ENCODE measurements at regions of chr15 and their contacts with region 1.

Region 1: DNA sequence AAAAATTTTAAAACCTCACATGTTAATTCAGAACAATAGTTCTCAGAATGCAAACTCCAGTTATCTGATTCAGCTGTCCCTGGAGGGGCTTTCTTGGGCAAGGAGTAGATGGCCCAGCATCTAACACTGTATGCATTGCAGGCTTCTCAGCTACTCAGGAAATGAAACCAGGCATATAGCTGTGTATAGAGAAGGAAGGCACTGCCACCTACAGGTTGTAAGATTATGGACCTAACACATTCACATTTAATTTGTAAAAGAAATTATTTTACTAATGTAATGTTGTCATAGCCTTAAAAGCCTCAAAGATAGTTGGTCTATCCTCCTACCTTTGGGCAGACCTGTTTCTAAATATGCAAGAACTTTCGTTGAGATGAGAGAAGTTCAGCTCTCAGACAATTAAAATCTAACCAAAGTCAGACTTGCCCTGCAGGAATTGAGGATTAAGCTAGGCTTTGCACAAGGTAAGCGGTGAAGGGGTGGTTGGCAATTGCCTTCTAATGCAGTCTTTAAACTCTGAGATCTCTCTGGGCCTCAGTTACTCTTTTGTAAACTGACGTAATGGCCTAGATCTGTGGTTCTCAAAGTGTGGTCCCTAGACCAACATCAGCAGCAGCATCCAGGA is 132.8 kb upstream of the SLC24A5 start:
- DNase-seq: no peak
- H3K4me3 ChIP-seq: no peak overlapping the region
- H3K27ac ChIP-seq: no peak overlapping the region
- H3K4me1 ChIP-seq: no peaks in the 10 kb centered on the region
- H3K27me3 ChIP-seq: peaks cover 0 to 10% (median 0%) of the 10 kb centered on the region in 4 donors
- CTCF ChIP-seq: peak; percentile 30 to 74 (median 68)
- POLR2A ChIP-seq: no peak

Region 2: GRCh38 chr15:47196057-47196456 is 792.0 kb before region 1 on chr15:
- intact Hi-C with region 1: loop called (anchors 5 kb)
- DNase-seq: no peak
- H3K4me3 ChIP-seq: no peak overlapping the region
- H3K27ac ChIP-seq: no peak overlapping the region
- H3K4me1 ChIP-seq: peaks cover 0 to 5% (median 0%) of the 10 kb centered on the region in 3 donors
- H3K27me3 ChIP-seq: peaks cover 0 to 7% (median 0%) of the 10 kb centered on the region in 4 donors
- CTCF ChIP-seq: peak in 5 of 6 experiments; percentile 64 to 78 (median 74)
- POLR2A ChIP-seq: no peak

Region 3: GRCh38 chr15:47473832-47474231 is 514.2 kb before region 1 on chr15:
- intact Hi-C with region 1: loop called (anchors 10 kb)
- DNase-seq: no peak
- H3K4me3 ChIP-seq: no peak overlapping the region
- H3K27ac ChIP-seq: peak overlapping the region in 1 of 4 donors; percentile 19
- H3K4me1 ChIP-seq: peaks cover 0 to 7% (median 0%) of the 10 kb centered on the region in 3 donors
- H3K27me3 ChIP-seq: no peaks in the 10 kb centered on the region
- CTCF ChIP-seq: no peak
- POLR2A ChIP-seq: no peak

Region 4: DNA sequence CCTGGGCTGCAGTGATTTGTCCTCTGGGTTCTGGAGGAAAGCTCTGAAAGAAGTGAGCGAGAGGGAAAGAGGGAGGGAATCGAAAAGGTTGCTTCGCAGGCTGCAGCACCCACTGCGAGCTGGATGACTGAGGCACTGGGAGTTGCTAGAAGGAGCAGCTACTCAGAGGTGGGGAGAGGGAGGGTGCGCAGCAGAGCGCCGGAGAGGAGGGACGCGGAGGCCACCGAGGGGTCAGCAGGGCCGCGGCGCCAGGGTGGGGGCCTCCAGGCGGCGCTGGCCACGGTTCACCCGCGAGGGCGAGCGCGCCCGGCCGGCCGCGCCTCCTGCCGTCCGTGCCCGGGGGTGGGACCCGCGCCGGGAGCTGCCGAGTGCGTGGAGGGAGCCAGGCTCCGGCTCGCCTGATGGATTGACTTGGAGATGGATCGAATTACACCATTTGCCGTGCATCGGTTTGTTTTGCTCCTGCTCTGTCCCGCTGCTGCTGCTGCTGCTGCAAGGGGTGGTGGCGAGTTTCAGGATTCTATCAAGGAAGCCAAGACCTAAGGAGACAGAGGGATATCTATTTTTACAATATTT is 270.9 kb before region 1 on chr15 and contains the start of gene SEMA6D:
- intact Hi-C with region 1: loop called (anchors 10 kb)
- DNase-seq: no peak
- H3K4me3 ChIP-seq: peak within 1 kb of the TSS; percentile 50 to 82 (median 61)
- H3K27ac ChIP-seq: peak within 1 kb of the TSS; percentile 57 to 90 (median 82)
- H3K4me1 ChIP-seq: peaks cover 5 to 52% (median 7%) of the 10 kb centered on the region in 3 donors
- H3K27me3 ChIP-seq: peaks cover 0 to 69% (median 0%) of the 10 kb centered on the region in 4 donors
- CTCF ChIP-seq: peak in 2 of 6 experiments; percentile 39 to 50
- POLR2A ChIP-seq: no peak
- total RNA-seq, gene SEMA6D: 0.40 to 4.0 (median 1.1) TPM

Region 5: DNA sequence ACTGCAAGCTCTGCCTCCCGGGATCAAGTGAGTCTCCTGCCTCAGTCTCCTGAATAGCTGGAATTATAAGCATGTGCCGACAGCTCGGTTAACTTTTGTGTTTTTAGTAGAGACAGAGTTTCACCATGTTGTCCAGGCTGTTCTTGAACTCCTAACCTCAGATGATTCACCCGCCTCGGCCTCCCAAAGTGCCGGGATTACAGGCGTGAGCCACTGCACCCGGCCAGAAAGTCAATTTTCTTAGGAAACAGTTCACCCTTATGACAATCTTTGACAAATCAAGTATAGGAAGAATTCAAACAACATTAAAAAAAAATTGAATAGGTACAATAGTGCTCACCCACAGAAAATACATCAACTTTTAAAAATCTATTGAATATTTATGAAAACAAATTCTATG is 319.6 kb after region 1 on chr15:
- intact Hi-C with region 1: no loop called
- DNase-seq: no peak
- H3K4me3 ChIP-seq: no peak overlapping the region
- H3K27ac ChIP-seq: no peak overlapping the region
- H3K4me1 ChIP-seq: no peaks in the 10 kb centered on the region
- H3K27me3 ChIP-seq: no peaks in the 10 kb centered on the region
- CTCF ChIP-seq: no peak
- POLR2A ChIP-seq: no peak

Measured in esophagus squamous epithelium (tissue), 5 donors.